ENCODE measurements at regions of chr10 and their contacts with region 1.

Region 1: DNA sequence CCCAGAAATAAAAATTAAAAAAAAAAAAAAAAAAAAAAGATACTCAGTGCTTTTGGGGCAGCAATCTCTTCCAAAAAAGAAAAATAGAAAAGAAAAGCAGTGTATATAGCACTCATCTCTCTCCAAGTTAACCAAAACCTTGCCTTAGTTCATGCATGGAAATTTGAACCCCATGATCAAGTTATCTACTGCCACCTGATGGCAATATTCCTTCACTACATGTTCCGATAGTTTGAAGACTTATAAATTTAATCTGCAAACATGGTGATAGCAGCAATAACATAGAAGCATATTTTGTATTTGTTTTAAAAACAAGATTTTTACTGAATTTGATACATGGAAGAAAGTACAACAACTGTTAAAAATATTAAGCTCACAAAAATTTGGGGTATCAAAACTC is 48.6 kb upstream of the SLIT1 start:
- DNase-seq: no peak
- H3K4me3 Mint-ChIP-seq: no peak overlapping the region
- H3K27ac Mint-ChIP-seq: no peak overlapping the region
- H3K4me1 Mint-ChIP-seq: peaks cover 9% of the 10 kb centered on the region
- H3K27me3 Mint-ChIP-seq: no peaks in the 10 kb centered on the region

Region 2: GRCh38 chr10:97192952-97193435 is 41.4 kb before region 1 on chr10:
- CTCF ChIA-PET with region 1: no interaction called
- POLR2A ChIA-PET with region 1: no interaction called
- DNase-seq: no peak
- H3K4me3 Mint-ChIP-seq: no peak overlapping the region
- H3K27ac Mint-ChIP-seq: no peak overlapping the region
- H3K4me1 Mint-ChIP-seq: peaks cover 11% of the 10 kb centered on the region
- H3K27me3 Mint-ChIP-seq: peaks cover 47% of the 10 kb centered on the region

Region 3: GRCh38 chr10:97222326-97222961 is 12.0 kb before region 1 on chr10:
- CTCF ChIA-PET with region 1: interaction called, 15 read pairs
- POLR2A ChIA-PET with region 1: interaction called, 3 read pairs
- DNase-seq: no peak
- H3K4me3 Mint-ChIP-seq: no peak overlapping the region
- H3K27ac Mint-ChIP-seq: no peak overlapping the region
- H3K4me1 Mint-ChIP-seq: peaks cover 45% of the 10 kb centered on the region
- H3K27me3 Mint-ChIP-seq: no peaks in the 10 kb centered on the region

Region 4: DNA sequence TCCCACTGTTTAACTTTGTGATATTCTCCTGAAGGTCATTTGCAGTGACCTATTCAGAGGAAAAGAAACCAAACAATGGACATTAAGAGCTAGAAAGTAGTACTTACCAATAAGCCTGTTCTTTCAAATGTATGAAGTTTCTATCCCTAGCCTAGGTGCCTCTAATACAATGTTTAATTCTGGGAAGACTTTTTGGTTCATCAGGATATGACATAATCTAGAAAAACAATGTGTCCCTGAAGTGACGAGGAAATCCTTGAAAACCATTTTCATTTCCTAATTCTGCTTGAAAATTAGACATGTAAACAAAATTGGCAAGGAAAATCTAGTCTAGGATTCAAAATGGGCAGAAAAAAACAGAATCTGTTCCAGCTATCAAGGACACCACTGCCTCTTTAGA is 22.0 kb after region 1 on chr10:
- CTCF ChIA-PET with region 1: interaction called, 10 read pairs
- POLR2A ChIA-PET with region 1: no interaction called
- DNase-seq: no peak
- H3K4me3 Mint-ChIP-seq: no peak overlapping the region
- H3K27ac Mint-ChIP-seq: no peak overlapping the region
- H3K4me1 Mint-ChIP-seq: peaks cover 4% of the 10 kb centered on the region
- H3K27me3 Mint-ChIP-seq: no peaks in the 10 kb centered on the region

Measured in activated CD4-positive, alpha-beta memory T cell treated with anti-CD3 and anti-CD28 coated beads, Interleukin-2, amount 10 ng/mL, durations not matched to agents 7 days and 5 days (primary cell).